GM12878 (cell line): ENCODE measurements at regions of chr5 and their contacts with region 1.

Region 1: DNA sequence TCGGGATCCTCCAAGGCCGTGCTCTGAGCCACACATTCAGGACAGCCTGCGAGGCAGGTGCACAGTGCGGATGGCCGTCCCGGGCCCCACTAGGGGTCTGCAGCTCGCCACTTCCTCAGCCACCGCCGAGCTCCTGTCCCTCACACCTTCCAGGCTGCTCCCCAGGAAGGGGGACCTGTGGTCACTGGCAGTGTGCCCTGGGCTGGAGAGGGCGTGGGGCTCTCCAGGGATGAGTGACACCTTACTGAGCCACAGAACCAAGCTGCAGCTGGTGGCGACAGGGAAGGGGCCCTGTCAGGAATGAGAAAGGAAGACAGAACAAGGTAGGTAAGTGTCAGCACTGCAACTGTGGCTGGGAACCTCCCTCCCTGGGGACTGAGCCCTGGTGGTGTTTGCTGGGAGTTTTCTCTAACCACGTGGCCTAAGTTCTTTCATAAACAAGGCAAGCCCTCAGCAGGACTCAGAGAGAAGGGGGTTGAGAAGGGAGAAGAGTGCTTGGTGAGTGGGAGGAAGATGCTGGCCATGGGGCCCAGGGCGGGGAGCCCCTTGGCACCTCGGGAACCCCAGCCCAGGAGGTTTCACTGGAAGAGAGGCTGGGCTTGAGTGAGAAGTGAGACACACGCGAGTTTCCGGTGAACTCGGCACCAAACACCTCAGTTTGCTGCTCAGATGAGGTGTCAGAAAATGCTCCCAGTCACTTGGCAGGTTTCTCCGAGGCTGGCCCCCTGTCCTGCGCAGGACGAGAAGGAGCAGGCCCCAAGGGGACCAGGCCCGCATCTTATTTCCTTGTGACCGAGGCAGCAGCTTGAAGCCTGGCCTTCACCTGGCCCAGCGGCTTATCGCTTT is 5.2 kb downstream of the IL13 start:
- DNase-seq: peak; percentile 99
- ATAC-seq: peak; percentile 72
- H3K4me3 ChIP-seq: no peak overlapping the region
- H3K27ac ChIP-seq: peak overlapping the region; percentile 96
- H3K4me1 ChIP-seq: peaks cover 61% of the 10 kb centered on the region
- H3K27me3 ChIP-seq: no peaks in the 10 kb centered on the region
- CTCF ChIP-seq: 0 out of 6 replicates have a peak, but pooled peaks of 2 of the 3 experiments have one; percentile 1 to 2
- EP300 ChIP-seq: peak; percentile 85 to 90; a peak in 3 of 4 replicates
- POLR2A ChIP-seq: peak; percentile 65; the same call in 1 of the 2 replicates
- RAD21 ChIP-seq: peak; percentile 18; the same call in 1 of the 2 replicates

Region 2: GRCh38 chr5:132419502-132420468 is 243.4 kb before region 1 on chr5:
- CTCF ChIA-PET with region 1: interaction called, 5 read pairs
- POLR2A ChIA-PET with region 1: interaction called, 3 read pairs
- RAD21 ChIA-PET with region 1: interaction called, 8 read pairs
- SMC1A ChIA-PET with region 1: interaction called, 3 read pairs
- in situ Hi-C with region 1: no loop called
- intact Hi-C with region 1: loop called (anchors 5 kb)
- DNase-seq: no peak
- ATAC-seq: peak; percentile 50
- H3K4me3 ChIP-seq: peak overlapping the region; percentile 31; the same call in 1 of the 2 replicates
- H3K27ac ChIP-seq: peak overlapping the region; percentile 94
- H3K4me1 ChIP-seq: peaks cover 79% of the 10 kb centered on the region
- H3K27me3 ChIP-seq: no peaks in the 10 kb centered on the region
- CTCF ChIP-seq: peak; percentile 74 to 81 (median 80)
- EP300 ChIP-seq: no peak
- POLR2A ChIP-seq: no peak
- RAD21 ChIP-seq: peak; percentile 78

Region 3: GRCh38 chr5:132434391-132435286 is 228.5 kb before region 1 on chr5:
- CTCF ChIA-PET with region 1: no interaction called
- POLR2A ChIA-PET with region 1: no interaction called
- RAD21 ChIA-PET with region 1: no interaction called
- SMC1A ChIA-PET with region 1: no interaction called
- in situ Hi-C with region 1: no loop called
- intact Hi-C with region 1: no loop called
- DNase-seq: no peak
- ATAC-seq: no peak
- H3K4me3 ChIP-seq: no peak overlapping the region
- H3K27ac ChIP-seq: no peak overlapping the region
- H3K4me1 ChIP-seq: peaks cover 44% of the 10 kb centered on the region
- H3K27me3 ChIP-seq: no peaks in the 10 kb centered on the region
- CTCF ChIP-seq: no peak
- EP300 ChIP-seq: no peak
- POLR2A ChIP-seq: no peak
- RAD21 ChIP-seq: no peak

Region 4: GRCh38 chr5:132674671-132675506 is 11.7 kb after region 1 on chr5:
- CTCF ChIA-PET with region 1: interaction called, 57 read pairs
- POLR2A ChIA-PET with region 1: interaction called, 118 read pairs
- RAD21 ChIA-PET with region 1: interaction called, 148 read pairs
- SMC1A ChIA-PET with region 1: interaction called, 156 read pairs
- in situ Hi-C with region 1: no loop called
- intact Hi-C with region 1: loop called (anchors 1 kb)
- DNase-seq: peak; percentile 93
- ATAC-seq: peak; percentile 88
- H3K4me3 ChIP-seq: peak overlapping the region; percentile 29; the same call in 1 of the 2 replicates
- H3K27ac ChIP-seq: peak overlapping the region; percentile 75
- H3K4me1 ChIP-seq: peaks cover 33% of the 10 kb centered on the region
- H3K27me3 ChIP-seq: no peaks in the 10 kb centered on the region
- CTCF ChIP-seq: no peak
- EP300 ChIP-seq: peak; percentile 92 to 96
- POLR2A ChIP-seq: peak; percentile 33; the same call in 1 of the 2 replicates
- RAD21 ChIP-seq: no peak

Region 5: GRCh38 chr5:132714456-132715307 is 51.5 kb after region 1 on chr5:
- CTCF ChIA-PET with region 1: interaction called, 5 read pairs
- POLR2A ChIA-PET with region 1: interaction called, 3 read pairs
- RAD21 ChIA-PET with region 1: interaction called, 35 read pairs
- SMC1A ChIA-PET with region 1: interaction called, 22 read pairs
- in situ Hi-C with region 1: no loop called
- intact Hi-C with region 1: loop called (anchors 5 kb)
- DNase-seq: no peak
- ATAC-seq: peak; percentile 64
- H3K4me3 ChIP-seq: no peak overlapping the region
- H3K27ac ChIP-seq: no peak overlapping the region
- H3K4me1 ChIP-seq: no peaks in the 10 kb centered on the region
- H3K27me3 ChIP-seq: no peaks in the 10 kb centered on the region
- CTCF ChIP-seq: peak in 1 of 3 experiments; percentile 28; a peak in 2 of 6 replicates
- EP300 ChIP-seq: no peak
- POLR2A ChIP-seq: no peak
- RAD21 ChIP-seq: 0 out of 2 replicates have a peak, but pooled peaks have one; percentile 8

Region 6: DNA sequence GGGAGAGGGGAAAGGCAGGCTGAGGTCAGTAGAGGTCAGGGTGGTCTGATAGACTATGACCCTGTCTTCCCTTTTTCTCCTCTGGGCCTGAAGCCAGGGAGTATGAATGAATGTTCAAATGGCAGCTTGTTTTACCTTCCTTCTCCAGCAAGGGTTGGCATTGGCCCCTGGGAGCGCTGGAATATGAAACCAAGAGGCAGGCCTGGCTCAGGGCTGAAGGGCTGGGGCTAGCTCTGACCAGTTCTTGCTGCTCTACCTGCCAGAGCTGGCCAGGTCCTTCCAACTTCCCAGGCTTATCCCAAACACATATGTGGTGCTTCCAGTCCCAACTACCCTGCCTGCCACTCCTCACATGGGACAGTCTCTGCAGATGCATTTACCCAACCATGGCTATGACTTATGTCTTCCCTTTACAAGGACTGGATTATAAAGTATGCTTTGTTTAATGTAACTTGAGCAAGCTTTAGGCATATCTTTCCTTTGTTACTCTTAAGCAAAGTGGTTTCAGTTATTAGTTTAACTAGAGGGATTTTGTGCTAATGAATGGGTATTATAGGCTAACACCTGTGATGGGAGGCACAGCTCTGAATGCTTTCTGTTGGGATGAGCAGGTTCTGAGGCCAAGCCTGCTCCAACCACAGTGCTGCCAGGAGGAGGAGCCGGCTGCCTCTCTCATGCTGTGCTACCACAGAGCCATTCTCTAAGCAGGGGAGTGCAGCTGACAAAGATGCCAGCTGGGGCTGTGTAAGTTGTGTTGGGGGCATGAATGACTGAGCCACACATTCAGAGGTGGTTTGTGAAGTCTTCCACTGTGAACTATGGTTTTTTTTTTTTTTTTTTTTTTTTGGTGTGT is 90.2 kb after region 1 on chr5:
- CTCF ChIA-PET with region 1: interaction called, 22 read pairs
- POLR2A ChIA-PET with region 1: interaction called, 40 read pairs
- RAD21 ChIA-PET with region 1: interaction called, 127 read pairs
- SMC1A ChIA-PET with region 1: interaction called, 69 read pairs
- in situ Hi-C with region 1: no loop called
- intact Hi-C with region 1: loop called (anchors 5 kb)
- DNase-seq: no peak
- ATAC-seq: peak; percentile 42
- H3K4me3 ChIP-seq: no peak overlapping the region
- H3K27ac ChIP-seq: no peak overlapping the region
- H3K4me1 ChIP-seq: peaks cover 25% of the 10 kb centered on the region
- H3K27me3 ChIP-seq: no peaks in the 10 kb centered on the region
- CTCF ChIP-seq: peak; percentile 6 to 44 (median 15); a peak in 3 of 6 replicates
- EP300 ChIP-seq: no peak
- POLR2A ChIP-seq: no peak
- RAD21 ChIP-seq: peak; percentile 27; the same call in 1 of the 2 replicates

Region 7: GRCh38 chr5:132883261-132883834 is 220.2 kb after region 1 on chr5:
- CTCF ChIA-PET with region 1: interaction called, 3 read pairs
- POLR2A ChIA-PET with region 1: no interaction called
- RAD21 ChIA-PET with region 1: interaction called, 3 read pairs
- SMC1A ChIA-PET with region 1: interaction called, 6 read pairs
- in situ Hi-C with region 1: no loop called
- intact Hi-C with region 1: loop called (anchors 5 kb)
- DNase-seq: no peak
- ATAC-seq: peak; percentile 96
- H3K4me3 ChIP-seq: no peak overlapping the region
- H3K27ac ChIP-seq: no peak overlapping the region
- H3K4me1 ChIP-seq: no peaks in the 10 kb centered on the region
- H3K27me3 ChIP-seq: no peaks in the 10 kb centered on the region
- CTCF ChIP-seq: peak; percentile 61 to 78 (median 67)
- EP300 ChIP-seq: no peak
- POLR2A ChIP-seq: no peak
- RAD21 ChIP-seq: peak; percentile 64